MCF 10A (cell line): ENCODE measurements at regions of chr20 and their contacts with region 1.

Region 1: GRCh38 chr20:22333885-22334545 is 250.4 kb downstream of the FOXA2 start:
- DNase-seq: peak; percentile 66
- H3K4me3 Mint-ChIP-seq: no peak overlapping the region
- H3K27ac Mint-ChIP-seq: no peak overlapping the region
- H3K4me1 Mint-ChIP-seq: peaks cover 10% of the 10 kb centered on the region
- H3K27me3 Mint-ChIP-seq: peaks cover 27% of the 10 kb centered on the region
- CTCF ChIP-seq: peak; percentile 78

Region 2: GRCh38 chr20:21832442-21833385 is 501.3 kb before region 1 on chr20:
- CTCF ChIA-PET with region 1: no interaction called
- POLR2A ChIA-PET with region 1: no interaction called
- intact Hi-C with region 1: no loop called
- DNase-seq: no peak
- H3K4me3 Mint-ChIP-seq: no peak overlapping the region
- H3K27ac Mint-ChIP-seq: peak overlapping the region; percentile 47
- H3K4me1 Mint-ChIP-seq: no peaks in the 10 kb centered on the region
- H3K27me3 Mint-ChIP-seq: peaks cover 28% of the 10 kb centered on the region
- CTCF ChIP-seq: no peak

Region 3: DNA sequence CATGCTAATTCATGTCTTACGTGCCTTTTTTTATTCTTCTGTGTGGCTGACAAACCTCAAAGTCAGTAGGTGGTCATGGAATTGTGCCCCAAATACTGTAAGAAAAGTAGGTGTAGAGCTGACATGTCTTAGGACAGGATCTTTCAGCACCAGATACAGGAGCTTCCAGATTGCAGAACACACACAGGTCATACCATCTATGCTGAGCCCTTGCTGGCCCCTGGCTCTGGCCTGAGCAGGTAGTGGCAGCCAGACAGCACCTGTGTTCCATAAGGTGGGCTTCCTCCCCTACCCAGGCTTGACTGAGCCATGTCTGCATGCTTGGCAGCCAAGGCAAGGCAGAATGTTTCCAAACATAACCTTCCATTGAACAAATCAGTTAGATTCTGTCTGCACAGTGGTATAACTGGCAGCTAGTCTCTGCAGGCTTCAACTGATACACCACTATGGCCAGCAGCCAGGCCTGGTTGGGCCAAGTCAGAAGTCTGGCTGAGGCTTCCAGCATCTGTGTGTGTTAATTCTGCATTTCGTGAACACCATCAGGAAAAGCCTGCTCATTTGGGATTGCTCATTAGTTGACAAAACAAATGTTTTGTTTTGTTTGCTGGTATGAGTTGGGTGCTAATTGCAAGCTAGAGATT is 116.2 kb before region 1 on chr20:
- CTCF ChIA-PET with region 1: no interaction called
- POLR2A ChIA-PET with region 1: no interaction called
- intact Hi-C with region 1: no loop called
- DNase-seq: no peak
- H3K4me3 Mint-ChIP-seq: no peak overlapping the region
- H3K27ac Mint-ChIP-seq: no peak overlapping the region
- H3K4me1 Mint-ChIP-seq: no peaks in the 10 kb centered on the region
- H3K27me3 Mint-ChIP-seq: peaks cover 78% of the 10 kb centered on the region
- CTCF ChIP-seq: no peak

Region 4: DNA sequence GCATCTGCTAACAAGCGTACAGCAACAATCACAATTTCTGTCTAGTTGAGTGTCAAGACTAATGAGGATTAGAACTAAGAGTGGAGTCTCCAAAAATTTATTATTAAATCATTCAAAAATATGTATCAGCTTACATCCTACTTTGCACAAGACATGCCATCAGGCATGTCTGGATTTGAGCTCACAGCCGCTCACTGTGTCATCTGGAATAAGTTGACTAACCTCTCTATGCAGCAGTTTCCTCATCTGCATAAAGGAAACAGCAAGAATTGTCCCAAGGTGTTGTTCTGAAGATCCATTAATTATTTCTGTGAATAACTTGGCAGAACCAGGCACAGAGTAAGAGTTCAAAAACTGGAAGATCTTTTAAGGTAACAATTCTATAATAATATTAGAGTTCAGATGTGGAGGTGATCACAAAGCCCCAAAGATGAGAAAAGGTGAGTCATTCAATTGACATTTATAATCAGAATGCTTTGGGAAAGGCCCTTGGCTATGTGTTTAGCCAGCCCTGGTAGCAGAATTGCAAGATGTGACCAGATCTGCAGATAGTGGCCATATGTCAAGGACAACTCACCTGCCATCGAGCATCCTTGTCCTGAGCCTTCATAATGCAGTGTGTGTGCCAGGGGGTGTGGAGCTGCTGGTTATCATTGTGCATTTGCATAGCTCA is 13.6 kb before region 1 on chr20:
- CTCF ChIA-PET with region 1: interaction called, 17 read pairs
- POLR2A ChIA-PET with region 1: no interaction called
- intact Hi-C with region 1: no loop called
- DNase-seq: peak; percentile 18
- H3K4me3 Mint-ChIP-seq: no peak overlapping the region
- H3K27ac Mint-ChIP-seq: peak overlapping the region; percentile 11
- H3K4me1 Mint-ChIP-seq: peaks cover 15% of the 10 kb centered on the region
- H3K27me3 Mint-ChIP-seq: no peaks in the 10 kb centered on the region
- CTCF ChIP-seq: no peak

Region 5: GRCh38 chr20:22462975-22463914 is 129.2 kb after region 1 on chr20:
- CTCF ChIA-PET with region 1: interaction called, 14 read pairs
- POLR2A ChIA-PET with region 1: interaction called, 4 read pairs
- intact Hi-C with region 1: no loop called
- DNase-seq: peak; percentile 70
- H3K4me3 Mint-ChIP-seq: no peak overlapping the region
- H3K27ac Mint-ChIP-seq: peak overlapping the region; percentile 57
- H3K4me1 Mint-ChIP-seq: peaks cover 10% of the 10 kb centered on the region
- H3K27me3 Mint-ChIP-seq: no peaks in the 10 kb centered on the region
- CTCF ChIP-seq: no peak

Region 6: GRCh38 chr20:22672191-22672590 is 338.2 kb after region 1 on chr20:
- CTCF ChIA-PET with region 1: interaction called, 549 read pairs
- POLR2A ChIA-PET with region 1: interaction called, 3 read pairs
- intact Hi-C with region 1: no loop called
- DNase-seq: no peak
- H3K4me3 Mint-ChIP-seq: no peak overlapping the region
- H3K27ac Mint-ChIP-seq: no peak overlapping the region
- H3K4me1 Mint-ChIP-seq: no peaks in the 10 kb centered on the region
- H3K27me3 Mint-ChIP-seq: no peaks in the 10 kb centered on the region
- CTCF ChIP-seq: no peak

Region 7: GRCh38 chr20:23340524-23340923 is 1006.5 kb after region 1 on chr20:
- CTCF ChIA-PET with region 1: interaction called, 16 read pairs
- POLR2A ChIA-PET with region 1: no interaction called
- intact Hi-C with region 1: loop called (anchors 5 kb)
- DNase-seq: peak; percentile 61
- H3K4me3 Mint-ChIP-seq: no peak overlapping the region
- H3K27ac Mint-ChIP-seq: no peak overlapping the region
- H3K4me1 Mint-ChIP-seq: no peaks in the 10 kb centered on the region
- H3K27me3 Mint-ChIP-seq: no peaks in the 10 kb centered on the region
- CTCF ChIP-seq: peak; percentile 62